ENCODE measurements at regions of chr2 and their contacts with region 1.

Region 1: DNA sequence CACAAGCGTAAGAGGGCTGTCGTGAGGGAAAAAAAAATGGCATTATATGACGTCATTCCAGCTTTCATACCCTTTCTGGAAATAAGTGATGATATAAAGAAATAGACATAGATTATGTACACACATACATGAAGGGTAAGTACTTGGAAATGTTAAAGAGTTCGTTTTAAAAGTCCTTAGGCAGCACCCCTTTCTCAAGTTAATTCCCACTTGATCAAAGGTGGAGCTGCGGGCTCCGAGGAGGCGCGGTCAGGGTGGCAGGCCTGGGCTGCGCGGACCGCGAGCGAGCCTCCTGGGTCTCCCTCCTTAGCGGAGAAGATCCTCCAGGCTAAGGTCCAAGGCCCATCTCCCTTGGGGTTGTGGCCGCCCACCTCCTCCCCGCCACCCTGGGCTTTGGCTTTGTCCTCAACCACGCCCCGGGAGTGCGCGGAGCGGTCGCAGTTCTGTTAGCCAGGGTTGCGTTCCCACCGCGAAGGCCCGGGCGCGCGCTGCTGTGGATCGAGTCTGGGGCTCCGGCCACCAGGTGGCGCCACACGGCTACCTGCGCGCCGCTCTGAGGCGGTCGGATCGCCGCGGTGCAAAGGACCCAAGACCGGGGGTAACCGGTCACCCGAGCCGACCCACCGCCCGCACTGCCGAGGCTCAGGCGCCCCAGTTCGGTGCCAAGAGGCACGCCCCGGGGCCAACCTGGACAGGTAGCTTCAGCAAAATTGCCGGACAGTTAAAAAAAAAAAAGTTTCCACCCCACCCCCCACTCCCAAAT is 66.8 kb downstream of the HNRNPLL start:
- DNase-seq: peak; percentile 85
- CTCF ChIP-seq: peak; percentile 88

Region 2: GRCh38 chr2:37500031-37500430 is 1035.9 kb before region 1 on chr2:
- CTCF ChIA-PET with region 1: no interaction called
- POLR2A ChIA-PET with region 1: no interaction called
- DNase-seq: no peak
- CTCF ChIP-seq: no peak

Region 3: DNA sequence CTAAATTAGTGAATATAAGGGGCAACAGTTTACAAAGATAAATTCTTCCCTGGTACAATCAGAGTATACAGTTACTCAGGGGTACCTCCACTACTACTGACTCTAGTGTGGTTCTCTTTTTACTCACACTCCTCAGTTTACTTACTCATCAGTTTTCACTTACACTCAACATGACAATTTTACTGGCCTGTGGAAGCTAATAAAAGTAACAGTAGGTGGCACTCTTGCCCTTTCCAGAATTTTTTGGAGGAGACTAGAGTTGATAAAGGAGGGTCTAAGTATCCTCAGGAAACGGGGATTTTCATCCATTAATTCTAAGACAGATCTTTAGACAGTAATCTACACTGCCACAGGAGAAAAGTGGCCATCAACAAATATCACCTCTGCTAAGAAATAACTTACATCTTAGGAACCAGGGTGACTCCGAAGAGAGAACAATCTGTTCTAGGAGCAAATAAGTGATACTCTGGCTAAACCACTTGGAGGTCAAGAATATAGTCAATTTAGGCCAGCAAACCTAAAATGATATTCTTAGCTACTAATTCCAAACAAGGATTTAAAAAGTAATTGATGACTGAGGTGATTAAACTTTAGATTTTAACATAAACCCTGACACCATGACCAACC is 220.1 kb before region 1 on chr2:
- CTCF ChIA-PET with region 1: interaction called, 12 read pairs
- POLR2A ChIA-PET with region 1: no interaction called
- DNase-seq: peak; percentile 47
- CTCF ChIP-seq: peak; percentile 60

Region 4: GRCh38 chr2:38485734-38486133 is 50.2 kb before region 1 on chr2:
- CTCF ChIA-PET with region 1: no interaction called
- POLR2A ChIA-PET with region 1: no interaction called
- DNase-seq: peak; percentile 71
- CTCF ChIP-seq: peak; percentile 15

Region 5: GRCh38 chr2:38554973-38555595 is 19.2 kb after region 1 on chr2:
- CTCF ChIA-PET with region 1: interaction called, 14 read pairs
- POLR2A ChIA-PET with region 1: no interaction called
- DNase-seq: no peak
- CTCF ChIP-seq: peak; percentile 30

Region 6: GRCh38 chr2:38581193-38582147 is 45.5 kb after region 1 on chr2:
- CTCF ChIA-PET with region 1: interaction called, 17 read pairs
- POLR2A ChIA-PET with region 1: no interaction called
- DNase-seq: peak; percentile 26
- CTCF ChIP-seq: peak; percentile 60

Region 7: DNA sequence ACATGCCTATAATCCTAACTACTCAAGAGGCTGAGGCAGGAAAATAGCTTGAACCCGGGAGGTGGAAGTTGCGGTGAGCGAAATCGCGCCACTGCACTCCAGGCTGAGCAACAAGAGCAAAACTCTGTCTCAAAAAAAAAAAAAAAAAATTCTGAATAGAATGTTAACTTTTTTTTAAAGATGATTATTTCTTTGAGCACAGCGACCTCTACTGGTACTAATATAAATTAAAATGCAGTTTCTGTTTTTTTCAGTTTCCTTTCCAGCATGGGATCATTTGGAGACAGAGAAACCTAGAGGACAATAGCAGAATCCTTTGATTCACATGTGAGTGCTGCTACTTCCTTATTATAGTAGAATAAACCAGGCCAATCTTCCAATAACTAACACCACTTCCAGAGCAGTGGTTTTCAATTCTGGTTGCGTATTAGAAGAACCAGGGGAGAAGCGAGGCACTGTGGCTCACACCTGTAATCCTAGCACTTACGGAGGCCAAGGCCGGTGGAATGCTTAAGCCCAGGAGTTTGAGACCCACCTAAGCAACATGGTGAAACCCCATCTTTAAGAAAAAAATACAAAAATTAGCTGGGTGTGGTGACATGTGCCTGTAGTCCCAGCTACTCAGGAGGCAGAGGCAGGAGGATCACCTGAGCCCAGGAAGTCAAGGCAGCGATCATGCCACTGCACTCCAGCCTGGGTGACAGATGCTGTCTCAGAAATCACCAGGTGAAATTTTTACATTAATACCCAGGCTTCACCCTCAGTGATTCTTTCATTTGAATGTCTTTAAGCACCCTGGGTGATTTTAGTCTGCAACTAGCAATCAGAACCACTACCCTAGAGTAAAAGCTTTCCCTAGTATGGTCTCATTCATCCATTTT is 205.2 kb after region 1 on chr2:
- CTCF ChIA-PET with region 1: interaction called, 40 read pairs
- POLR2A ChIA-PET with region 1: interaction called, 5 read pairs
- DNase-seq: no peak
- CTCF ChIP-seq: peak; percentile 34

Measured in GM10248 (cell line).